ENCODE measurements at regions of chr10 and their contacts with region 1.

Region 1: GRCh38 chr10:46251857-46252847 is 34.6 kb upstream of the ANTXRL start:
- DNase-seq: no peak

Region 2: DNA sequence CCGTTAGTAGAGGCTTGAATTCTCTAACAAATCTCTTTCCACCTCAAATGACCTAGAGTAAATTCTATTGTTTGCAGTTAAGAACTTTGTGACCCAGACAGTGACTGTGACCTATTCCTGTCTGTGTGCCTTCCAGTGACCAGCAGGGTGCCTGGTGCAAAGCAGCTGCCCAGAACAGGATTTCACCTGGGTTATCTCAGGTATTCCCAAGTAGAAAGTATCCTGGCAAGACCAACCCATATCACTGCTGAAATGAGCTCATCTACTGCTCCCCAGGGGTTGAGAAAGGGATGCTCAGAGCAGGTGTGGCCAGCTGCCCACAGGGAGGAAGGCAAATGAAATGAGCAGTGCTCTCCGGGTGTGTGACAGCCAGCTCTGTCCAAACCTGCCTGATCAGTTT is 204.0 kb before region 1 on chr10:
- in situ Hi-C with region 1: no loop called
- DNase-seq: no peak

Region 3: GRCh38 chr10:46311501-46312441 is 59.6 kb after region 1 on chr10:
- in situ Hi-C with region 1: loop called (anchors 5 kb)
- DNase-seq: no peak